Dendritic cell treated with granulocyte-macrophage colony-stimulating factor and Interleukin-4, amounts not matched to agents 40 ng/mL and 50 ng/mL, for 4 days (primary cell): ENCODE measurements at regions of chr18 and their contacts with region 1.

Region 1: DNA sequence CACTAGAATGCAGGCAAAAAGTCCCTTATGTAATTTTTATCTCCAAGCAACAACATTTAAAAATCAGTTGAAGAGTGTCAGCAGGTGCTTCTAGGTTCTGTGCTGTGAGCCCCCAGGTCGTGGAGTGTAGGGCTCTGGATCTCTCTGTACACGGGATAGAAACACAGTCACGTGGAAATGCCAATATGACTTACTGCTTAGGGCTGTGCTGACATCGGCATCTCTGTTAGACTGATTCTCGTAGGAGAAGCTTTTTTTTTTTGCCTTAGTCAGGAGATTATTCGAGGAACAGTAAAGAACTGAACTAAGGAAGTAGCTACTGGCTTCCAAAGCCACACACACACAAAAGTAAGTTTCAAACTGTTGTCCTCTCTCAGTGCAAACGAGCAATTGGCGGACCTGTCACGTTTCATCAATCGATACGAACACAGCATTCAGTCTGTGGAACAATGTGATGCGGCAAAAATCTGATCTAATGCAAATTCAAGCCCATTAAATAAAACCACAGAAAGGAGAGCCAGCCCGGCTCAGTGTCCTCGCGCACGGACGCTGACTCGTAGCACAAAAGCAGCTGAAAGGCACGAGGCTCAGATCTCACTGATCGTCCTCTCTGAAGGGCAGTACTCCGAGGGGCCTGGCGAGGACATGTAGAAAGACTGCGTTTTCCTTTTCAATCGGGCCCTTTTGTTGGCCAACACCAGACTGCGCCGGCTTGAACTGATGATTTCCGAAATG is 41.5 kb downstream of the PRELID3A start:
- H3K4me3 Mint-ChIP-seq: no peak overlapping the region
- H3K27ac Mint-ChIP-seq: peak overlapping the region; percentile 85
- H3K4me1 Mint-ChIP-seq: peaks cover 17% of the 10 kb centered on the region
- H3K27me3 Mint-ChIP-seq: no peaks in the 10 kb centered on the region

Region 2: GRCh38 chr18:12408247-12408869 is 40.9 kb before region 1 on chr18:
- intact Hi-C with region 1: loop called (anchors 5 kb)
- H3K4me3 Mint-ChIP-seq: peak overlapping the region; percentile 79
- H3K27ac Mint-ChIP-seq: peak overlapping the region; percentile 76
- H3K4me1 Mint-ChIP-seq: peaks cover 25% of the 10 kb centered on the region
- H3K27me3 Mint-ChIP-seq: peaks cover 32% of the 10 kb centered on the region